Activated CD4-positive, alpha-beta memory T cell treated with anti-CD3 and anti-CD28 coated beads for 36 hours (primary cell): ENCODE measurements at regions of chr6 and their contacts with region 1.

Region 1: DNA sequence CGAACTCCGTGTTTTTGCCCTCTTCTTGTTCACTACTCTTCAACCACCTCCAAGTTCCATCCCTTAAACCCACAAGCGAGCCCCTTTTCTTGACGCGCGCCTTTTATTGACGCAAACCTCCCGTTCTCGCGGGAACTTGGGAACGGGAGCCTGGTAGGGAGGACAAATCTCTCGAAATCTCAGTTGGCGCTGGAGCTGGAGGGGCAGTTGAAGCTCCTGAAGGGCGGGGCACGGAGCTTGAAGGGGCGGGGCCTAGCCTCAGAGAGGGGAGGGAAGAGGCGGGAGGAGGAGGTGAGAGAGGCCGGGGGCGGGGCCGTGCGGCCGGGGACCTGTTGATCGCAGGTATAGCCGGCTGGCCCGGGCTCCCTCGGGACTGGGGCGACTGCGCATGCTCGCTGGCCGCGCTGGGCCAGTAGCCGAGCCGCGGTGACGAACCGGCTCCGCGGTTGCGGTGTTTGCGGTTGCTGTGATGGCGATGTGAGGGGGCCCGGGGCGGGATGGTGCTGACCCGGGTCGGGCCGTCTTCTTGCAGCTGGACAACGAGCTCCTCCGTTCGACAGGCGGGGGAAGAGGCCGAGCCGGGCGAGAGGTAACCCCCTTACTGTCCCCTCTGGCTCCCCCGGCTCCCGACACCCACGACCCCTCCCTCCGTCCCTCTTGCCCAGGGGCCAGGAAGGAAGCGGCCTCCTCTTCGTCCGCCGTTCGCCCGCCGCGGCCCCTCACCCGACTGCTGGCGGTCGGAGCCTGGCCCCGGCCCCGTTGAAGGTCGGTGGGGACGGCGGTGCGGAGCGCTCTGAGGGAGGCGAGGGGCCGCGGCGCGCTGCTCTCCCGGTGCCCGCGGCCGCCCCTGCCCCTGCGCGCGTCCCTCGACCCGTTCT is at the start of gene FAM135A:
- DNase-seq: peak; percentile 98
- H3K4me3 Mint-ChIP-seq: peak within 1 kb of the TSS; percentile 88
- H3K27ac Mint-ChIP-seq: peak within 1 kb of the TSS; percentile 75
- H3K4me1 Mint-ChIP-seq: peaks cover 17% of the 10 kb centered on the region
- H3K27me3 Mint-ChIP-seq: no peaks in the 10 kb centered on the region
- total RNA-seq, gene FAM135A: 9.0 to 9.2 TPM

Region 2: DNA sequence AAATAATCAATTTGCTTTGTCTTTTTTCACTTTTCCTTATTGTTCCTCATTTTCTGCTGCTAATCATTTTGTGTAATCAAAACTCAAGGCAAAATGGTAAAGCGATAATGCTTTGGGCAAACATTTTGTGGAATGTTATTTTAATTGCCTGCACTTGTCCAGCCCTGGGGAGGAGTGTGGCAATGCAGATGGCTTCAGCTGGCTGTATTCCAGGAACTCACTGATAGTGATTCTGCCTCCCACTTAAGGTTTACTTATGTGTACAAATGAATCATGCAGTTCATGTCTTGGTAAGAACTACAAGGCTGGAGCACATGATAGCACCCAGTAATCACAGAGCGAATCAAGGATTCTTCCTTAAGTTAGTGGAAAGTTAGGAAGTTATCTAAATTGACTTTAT is 439.2 kb before region 1 on chr6:
- CTCF ChIA-PET with region 1: no interaction called
- POLR2A ChIA-PET with region 1: no interaction called
- intact Hi-C with region 1: no loop called
- DNase-seq: no peak
- H3K4me3 Mint-ChIP-seq: no peak overlapping the region
- H3K27ac Mint-ChIP-seq: no peak overlapping the region
- H3K4me1 Mint-ChIP-seq: no peaks in the 10 kb centered on the region
- H3K27me3 Mint-ChIP-seq: peaks cover 6% of the 10 kb centered on the region

Region 3: GRCh38 chr6:70566751-70567382 is 153.5 kb after region 1 on chr6 and contains the start of gene SDHAF4:
- CTCF ChIA-PET with region 1: interaction called, 6 read pairs
- POLR2A ChIA-PET with region 1: no interaction called
- intact Hi-C with region 1: loop called (anchors 1 kb)
- DNase-seq: peak; percentile 96
- H3K4me3 Mint-ChIP-seq: peak within 1 kb of the TSS; percentile 84
- H3K27ac Mint-ChIP-seq: peak within 1 kb of the TSS; percentile 60
- H3K4me1 Mint-ChIP-seq: peaks cover 19% of the 10 kb centered on the region
- H3K27me3 Mint-ChIP-seq: no peaks in the 10 kb centered on the region
- total RNA-seq, gene SDHAF4: 13.3 to 13.9 TPM

Region 4: GRCh38 chr6:70823651-70824050 is 410.3 kb after region 1 on chr6:
- CTCF ChIA-PET with region 1: no interaction called
- POLR2A ChIA-PET with region 1: no interaction called
- intact Hi-C with region 1: no loop called
- DNase-seq: no peak
- H3K4me3 Mint-ChIP-seq: no peak overlapping the region
- H3K27ac Mint-ChIP-seq: no peak overlapping the region
- H3K4me1 Mint-ChIP-seq: peaks cover 4% of the 10 kb centered on the region
- H3K27me3 Mint-ChIP-seq: no peaks in the 10 kb centered on the region